Heart left ventricle (tissue), 16 donors: ENCODE measurements at regions of chr16 and their contacts with region 1.

Region 1: GRCh38 chr16:11526655-11527350 is 59.9 kb downstream of the LITAF start:
- DNase-seq: no peak
- ATAC-seq: no peak
- H3K4me3 ChIP-seq: no peak overlapping the region
- H3K27ac ChIP-seq: no peak overlapping the region
- H3K4me1 ChIP-seq: peaks cover 0 to 6% (median 0%) of the 10 kb centered on the region in 12 donors
- H3K27me3 ChIP-seq: peaks cover 0 to 12% (median 2%) of the 10 kb centered on the region in 9 donors
- CTCF ChIP-seq: no peak
- POLR2A ChIP-seq: no peak

Region 2: DNA sequence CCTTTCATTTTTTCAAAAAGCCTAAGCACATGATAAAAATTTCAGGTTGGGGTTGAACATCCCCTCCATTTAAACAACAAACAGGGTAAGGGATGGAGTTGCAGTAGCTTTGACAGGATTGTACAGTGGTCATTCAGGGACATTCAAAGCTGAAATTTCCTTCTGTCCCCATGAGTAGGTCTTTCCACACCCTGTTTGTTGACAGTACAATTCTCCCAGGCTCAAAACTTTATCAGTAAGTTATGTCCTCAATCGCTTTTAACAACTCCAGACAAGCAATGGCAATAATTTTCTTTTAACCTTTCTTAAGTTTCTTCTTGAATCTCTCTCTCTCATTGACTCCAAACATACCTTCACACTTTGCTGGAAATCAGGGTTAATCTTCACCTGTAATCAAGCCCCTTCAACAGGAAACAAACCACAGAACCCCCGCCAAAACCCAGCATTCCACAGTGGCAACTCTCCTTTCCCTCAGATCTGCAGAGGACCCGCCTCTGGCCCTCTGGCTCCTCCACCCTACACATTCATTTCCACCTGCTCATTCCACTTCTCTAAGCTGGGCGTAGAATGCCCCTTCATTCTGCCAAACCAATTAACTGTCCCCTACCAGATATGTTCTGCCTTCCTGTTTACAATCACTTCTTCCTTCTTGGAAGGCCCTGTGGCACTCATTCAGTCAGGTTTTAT is 195.1 kb after region 1 on chr16:
- intact Hi-C with region 1: loop called in 3 of 10 experiments (anchors 5 kb)
- DNase-seq: no peak
- ATAC-seq: no peak
- H3K4me3 ChIP-seq: no peak overlapping the region
- H3K27ac ChIP-seq: no peak overlapping the region
- H3K4me1 ChIP-seq: peaks cover 0 to 21% (median 2%) of the 10 kb centered on the region in 12 donors
- H3K27me3 ChIP-seq: no peaks in the 10 kb centered on the region
- CTCF ChIP-seq: no peak
- POLR2A ChIP-seq: no peak

Region 3: DNA sequence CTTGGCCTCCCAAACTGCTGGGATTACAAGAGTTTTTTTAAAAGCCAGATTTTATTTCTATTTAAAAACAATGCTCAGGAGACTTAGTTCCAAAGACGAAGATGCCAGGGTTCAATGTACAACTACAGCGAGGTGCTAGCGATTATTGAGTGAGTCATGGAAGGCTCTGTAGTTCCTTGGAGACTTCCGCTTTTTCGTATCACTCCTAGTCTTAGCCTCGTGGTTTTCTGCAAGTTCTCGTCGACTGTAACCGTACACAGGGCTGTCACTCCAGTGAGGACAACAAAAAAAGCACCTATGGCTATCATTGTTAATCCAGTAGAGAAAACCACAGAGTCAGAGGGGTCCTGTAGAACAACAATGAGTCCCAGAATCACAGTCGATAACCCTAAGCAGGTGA is 293.0 kb after region 1 on chr16:
- intact Hi-C with region 1: loop called in 7 of 10 experiments (anchors 10 kb)
- DNase-seq: no peak
- ATAC-seq: no peak
- H3K4me3 ChIP-seq: no peak overlapping the region
- H3K27ac ChIP-seq: no peak overlapping the region
- H3K4me1 ChIP-seq: peaks cover 0 to 19% (median 5%) of the 10 kb centered on the region in 12 donors
- H3K27me3 ChIP-seq: no peaks in the 10 kb centered on the region
- CTCF ChIP-seq: no peak
- POLR2A ChIP-seq: no peak